ENCODE measurements at regions of chr2 and their contacts with region 1.

Region 1: DNA sequence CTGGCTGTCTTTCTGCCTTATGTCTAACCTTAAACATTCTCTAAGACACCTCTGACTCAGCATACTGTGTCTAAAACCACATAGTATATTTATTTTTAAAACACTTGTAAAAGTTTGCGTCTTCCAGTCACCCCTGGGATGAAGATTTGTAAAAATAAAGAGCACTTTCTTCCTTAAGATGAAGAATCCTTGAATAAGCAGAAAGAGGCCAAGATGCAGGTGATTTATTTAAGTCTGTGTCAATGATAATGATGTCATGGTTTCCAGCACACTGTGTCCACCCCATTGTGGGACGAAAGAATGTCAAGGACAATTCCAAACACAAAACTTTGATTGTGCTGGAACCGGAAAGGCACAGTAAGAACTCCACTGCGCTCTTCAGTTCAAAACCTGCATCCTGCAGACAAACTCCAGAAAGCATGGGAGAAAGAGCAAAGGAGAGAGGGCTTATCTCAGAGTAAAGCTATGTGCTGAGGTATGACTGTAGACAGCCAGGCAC is 92.9 kb downstream of the ZEB2 start:
- DNase-seq: no peak
- ATAC-seq: no peak
- H3K4me3 ChIP-seq: no peak overlapping the region
- H3K4me3 Mint-ChIP-seq: peak overlapping the region; percentile 29
- H3K27ac ChIP-seq: peak overlapping the region; percentile 8 to 55
- H3K27ac Mint-ChIP-seq: peak overlapping the region; percentile 73
- H3K4me1 ChIP-seq: peaks cover 37% of the 10 kb centered on the region in 2 donors
- H3K4me1 Mint-ChIP-seq: peaks cover 48% of the 10 kb centered on the region
- H3K27me3 ChIP-seq: no peaks in the 10 kb centered on the region
- H3K27me3 Mint-ChIP-seq: no peaks in the 10 kb centered on the region
- CTCF ChIP-seq: no peak

Region 2: DNA sequence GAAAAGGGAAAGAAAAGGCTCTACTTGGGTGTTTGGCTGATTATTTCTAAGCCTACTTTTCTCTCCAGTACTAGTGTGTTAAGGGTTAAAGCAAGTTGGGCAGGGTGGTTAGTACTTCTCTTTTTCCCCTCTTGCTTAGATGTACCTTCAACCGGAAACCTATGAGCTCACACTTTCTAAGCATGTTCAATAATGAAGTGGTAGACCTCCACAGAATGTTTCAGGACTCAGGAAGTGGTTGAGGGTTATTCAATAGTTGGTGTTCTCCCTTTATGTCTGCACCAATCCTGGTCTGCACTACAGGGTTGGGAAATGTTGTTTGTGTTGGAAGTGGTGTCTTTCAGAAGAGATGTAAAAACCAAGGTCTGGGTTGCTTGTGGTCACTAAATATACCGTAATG is 44.2 kb before region 1 on chr2:
- CTCF ChIA-PET with region 1: no interaction called
- POLR2A ChIA-PET with region 1: no interaction called
- intact Hi-C with region 1: no loop called
- DNase-seq: peak; percentile 69
- ATAC-seq: peak; percentile 96
- H3K4me3 ChIP-seq: peak overlapping the region in 1 of 5 experiments; percentile 50
- H3K4me3 Mint-ChIP-seq: peak overlapping the region; percentile 79
- H3K27ac ChIP-seq: peak overlapping the region in 1 of 2 donors; percentile 21
- H3K27ac Mint-ChIP-seq: peak overlapping the region; percentile 88
- H3K4me1 ChIP-seq: peaks cover 28 to 29% of the 10 kb centered on the region in 2 donors
- H3K4me1 Mint-ChIP-seq: peaks cover 50% of the 10 kb centered on the region
- H3K27me3 ChIP-seq: peaks cover 0 to 7% (median 0%) of the 10 kb centered on the region in 4 experiments
- H3K27me3 Mint-ChIP-seq: no peaks in the 10 kb centered on the region
- CTCF ChIP-seq: no peak

Region 3: DNA sequence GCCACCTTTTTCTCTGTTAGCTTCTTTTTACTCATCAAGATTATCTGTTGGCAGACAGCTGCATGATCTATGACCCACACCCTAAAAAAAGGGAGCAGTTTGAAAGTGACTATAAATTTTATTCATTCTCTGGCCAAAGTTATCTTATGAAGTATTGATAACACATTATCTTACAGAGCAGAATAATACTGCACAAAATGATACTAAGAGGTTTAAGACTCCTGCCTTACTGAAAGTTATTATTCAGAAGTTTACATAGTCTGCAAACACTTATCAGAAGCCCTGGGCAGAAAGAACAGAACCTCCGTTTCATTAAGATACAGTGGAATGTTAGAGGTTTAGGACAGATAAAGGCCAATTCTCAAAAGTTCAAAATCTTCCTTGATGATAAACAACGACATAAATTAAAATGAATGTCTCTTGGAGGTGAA is 14.7 kb after region 1 on chr2:
- CTCF ChIA-PET with region 1: no interaction called
- POLR2A ChIA-PET with region 1: no interaction called
- intact Hi-C with region 1: loop called (anchors 2 kb)
- DNase-seq: no peak
- ATAC-seq: no peak
- H3K4me3 ChIP-seq: no peak overlapping the region
- H3K4me3 Mint-ChIP-seq: no peak overlapping the region
- H3K27ac ChIP-seq: peak overlapping the region in 1 of 2 donors; percentile 25
- H3K27ac Mint-ChIP-seq: no peak overlapping the region
- H3K4me1 ChIP-seq: peaks cover 23 to 29% of the 10 kb centered on the region in 2 donors
- H3K4me1 Mint-ChIP-seq: peaks cover 69% of the 10 kb centered on the region
- H3K27me3 ChIP-seq: no peaks in the 10 kb centered on the region
- H3K27me3 Mint-ChIP-seq: no peaks in the 10 kb centered on the region
- CTCF ChIP-seq: no peak

Region 4: DNA sequence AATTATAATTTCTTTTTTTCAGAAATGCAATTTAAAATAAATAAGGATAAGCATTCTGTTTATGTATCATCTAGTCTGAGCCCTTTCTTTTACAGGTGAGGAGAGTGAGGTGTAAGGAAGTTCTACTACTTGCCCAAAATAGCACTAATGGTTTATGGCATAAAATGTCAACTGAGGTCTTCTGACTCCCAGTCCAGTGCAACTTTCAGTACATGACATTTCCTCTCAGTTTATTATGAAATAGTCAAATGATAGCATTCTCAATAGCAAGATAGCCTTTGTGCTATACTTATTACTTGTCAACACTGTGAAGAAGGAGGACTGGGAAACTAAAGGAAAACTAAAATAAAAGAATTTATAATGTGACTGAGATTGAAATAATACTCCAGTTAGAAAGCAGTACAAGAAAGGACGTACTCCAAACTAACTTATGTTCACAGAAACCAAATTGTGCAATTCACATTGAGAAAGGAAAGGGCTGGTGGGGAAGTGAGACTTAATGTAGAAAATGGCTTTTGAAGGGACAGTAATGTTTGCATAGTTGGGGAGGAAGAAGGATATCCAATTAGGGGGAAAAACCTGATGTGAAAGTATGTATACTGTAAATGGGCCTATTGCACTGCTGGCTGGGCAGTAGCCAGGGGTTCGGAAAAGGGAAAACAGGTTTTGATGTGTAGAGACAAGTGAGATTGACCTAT is 259.6 kb after region 1 on chr2:
- CTCF ChIA-PET with region 1: no interaction called
- POLR2A ChIA-PET with region 1: no interaction called
- intact Hi-C with region 1: loop called (anchors 10 kb)
- DNase-seq: peak; percentile 29
- ATAC-seq: no peak
- H3K4me3 ChIP-seq: no peak overlapping the region
- H3K4me3 Mint-ChIP-seq: no peak overlapping the region
- H3K27ac ChIP-seq: no peak overlapping the region
- H3K27ac Mint-ChIP-seq: no peak overlapping the region
- H3K4me1 ChIP-seq: peaks cover 19 to 21% of the 10 kb centered on the region in 2 donors
- H3K4me1 Mint-ChIP-seq: peaks cover 36% of the 10 kb centered on the region
- H3K27me3 ChIP-seq: no peaks in the 10 kb centered on the region
- H3K27me3 Mint-ChIP-seq: no peaks in the 10 kb centered on the region
- CTCF ChIP-seq: no peak

Measured in B cell (primary cell).